ENCODE measurements at regions of chr11 and their contacts with region 1.

Region 1: DNA sequence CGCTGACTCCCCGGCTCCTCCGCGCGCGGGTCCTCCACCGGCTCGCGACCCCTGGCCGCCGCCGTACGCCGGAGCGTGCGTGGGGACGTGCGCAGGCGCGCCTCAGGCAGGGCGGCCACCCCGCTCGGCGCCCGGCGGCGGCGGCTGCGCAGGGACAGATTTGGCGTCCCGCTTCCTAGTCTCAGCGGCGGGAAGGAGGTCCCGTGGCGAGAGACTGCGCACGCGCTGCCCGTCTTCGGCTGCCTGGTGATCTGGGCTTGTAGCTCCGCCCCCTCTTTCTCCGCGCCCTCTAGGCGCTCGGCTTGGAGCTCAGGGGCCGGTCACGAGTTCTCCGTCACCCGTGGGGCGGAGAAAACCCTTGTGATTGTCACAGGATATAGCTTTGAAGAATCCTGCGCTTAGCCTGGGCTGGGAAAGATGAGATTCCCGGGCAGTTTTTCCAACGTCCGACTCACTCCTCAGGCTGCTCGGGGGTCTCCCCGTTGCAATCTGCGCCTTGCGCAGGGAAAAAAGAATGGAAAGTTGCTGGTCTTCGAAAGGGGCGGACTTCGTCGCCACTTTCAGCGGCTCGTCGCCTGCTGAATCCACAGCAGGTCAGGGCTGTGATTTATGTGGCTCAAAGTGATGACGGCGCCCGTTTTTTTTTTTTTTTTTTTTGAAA is at the start of gene PATL1:
- DNase-seq: peak; percentile 99 to 100
- H3K4me3 ChIP-seq: peak within 1 kb of the TSS; percentile 66 to 96
- H3K27ac ChIP-seq: peak within 1 kb of the TSS; percentile 85 to 97
- H3K4me1 ChIP-seq: peaks cover 0 to 26% (median 23%) of the 10 kb centered on the region in 4 donors
- H3K27me3 ChIP-seq: no peaks in the 10 kb centered on the region
- CTCF ChIP-seq: no peak

Region 2: DNA sequence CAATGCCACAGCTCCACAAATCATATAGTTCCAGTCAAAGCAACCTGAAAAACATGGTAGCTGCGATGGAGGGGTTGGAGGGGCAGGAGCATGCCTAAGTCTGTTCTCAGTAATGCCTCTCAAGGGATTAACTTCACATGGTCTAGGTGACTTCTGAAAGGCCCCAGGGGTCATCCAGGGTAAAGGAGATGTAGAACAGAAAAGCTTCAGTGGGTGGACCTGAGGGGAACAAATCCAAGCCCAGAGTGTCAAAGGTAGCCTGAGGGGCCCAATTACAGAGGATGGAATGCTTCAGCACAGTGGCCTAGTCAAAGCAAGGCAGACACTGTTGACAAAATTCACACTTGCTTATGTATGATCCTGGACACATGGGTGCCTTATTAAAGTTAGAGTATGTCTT is 134.4 kb before region 1 on chr11:
- intact Hi-C with region 1: loop called (anchors 5 kb)
- DNase-seq: no peak
- H3K4me3 ChIP-seq: no peak overlapping the region
- H3K27ac ChIP-seq: no peak overlapping the region
- H3K4me1 ChIP-seq: peaks cover 0 to 15% (median 3%) of the 10 kb centered on the region in 4 donors
- H3K27me3 ChIP-seq: peaks cover 0 to 3% of the 10 kb centered on the region in 2 donors
- CTCF ChIP-seq: no peak

Region 3: DNA sequence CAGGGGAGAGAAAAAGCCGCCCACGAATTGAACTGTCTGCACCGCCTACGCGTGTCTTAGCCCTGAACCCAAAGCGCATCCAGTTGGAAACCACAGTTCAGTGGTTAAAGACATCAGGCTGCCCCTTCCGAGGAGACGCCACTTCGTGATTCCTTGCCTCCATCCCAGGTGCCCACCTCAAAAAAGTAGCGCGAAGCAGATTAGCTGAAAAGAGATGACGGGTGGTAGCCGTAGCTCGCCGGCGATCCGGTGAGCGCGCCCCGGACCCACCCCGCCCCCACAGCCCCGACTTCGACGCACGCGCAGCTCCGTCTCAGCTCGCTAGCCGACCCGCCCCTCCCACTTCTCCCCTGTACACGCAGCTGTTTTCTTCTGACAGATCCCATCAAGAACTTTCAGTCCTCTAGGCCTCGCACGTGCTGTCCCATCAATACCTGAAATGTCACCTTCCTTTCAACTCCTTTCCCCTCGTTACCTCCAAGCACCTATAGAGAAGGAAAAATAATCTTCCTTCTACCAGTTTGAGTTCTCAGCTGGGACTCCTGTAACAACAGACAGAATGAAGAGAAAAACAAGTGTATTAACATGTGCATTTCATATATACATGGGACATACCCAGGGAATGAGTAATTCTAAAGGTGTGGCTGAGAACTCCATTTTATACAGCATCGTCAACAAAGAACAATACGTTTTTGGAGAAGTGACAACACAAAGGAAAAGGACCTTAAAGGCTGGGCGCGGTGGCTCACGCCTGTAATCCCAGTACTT is 108.2 kb before region 1 on chr11:
- intact Hi-C with region 1: loop called (anchors 10 kb)
- DNase-seq: peak; percentile 88 to 94
- H3K4me3 ChIP-seq: peak overlapping the region; percentile 85 to 96
- H3K27ac ChIP-seq: peak overlapping the region; percentile 90 to 93
- H3K4me1 ChIP-seq: peaks cover 0 to 26% (median 5%) of the 10 kb centered on the region in 4 donors
- H3K27me3 ChIP-seq: no peaks in the 10 kb centered on the region
- CTCF ChIP-seq: no peak

Region 4: DNA sequence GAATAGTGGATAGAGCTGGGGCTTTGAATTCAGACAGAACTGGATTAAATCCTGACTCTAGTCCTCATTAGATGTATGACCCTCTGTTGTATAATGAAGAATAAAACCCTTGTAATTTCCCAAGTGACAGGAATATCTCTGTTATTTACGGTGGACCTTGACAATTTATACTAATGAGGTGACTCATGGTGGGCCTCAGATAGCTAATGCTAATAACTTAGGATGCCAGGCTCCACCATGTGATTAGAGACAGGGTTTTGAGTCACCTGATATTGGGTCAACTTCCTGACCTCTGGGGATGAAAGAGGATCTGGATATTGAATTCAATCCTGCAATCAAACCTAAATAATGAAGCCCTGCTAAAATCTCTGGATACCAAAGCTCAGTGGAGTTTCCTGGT is 87.1 kb before region 1 on chr11:
- intact Hi-C with region 1: no loop called
- DNase-seq: no peak
- H3K4me3 ChIP-seq: no peak overlapping the region
- H3K27ac ChIP-seq: no peak overlapping the region
- H3K4me1 ChIP-seq: no peaks in the 10 kb centered on the region
- H3K27me3 ChIP-seq: no peaks in the 10 kb centered on the region
- CTCF ChIP-seq: no peak

Region 5: GRCh38 chr11:59615637-59616395 is 53.3 kb before region 1 on chr11 and contains the start of gene OSBP:
- intact Hi-C with region 1: loop called (anchors 5 kb)
- DNase-seq: peak; percentile 100
- H3K4me3 ChIP-seq: peak within 1 kb of the TSS; percentile 82 to 96
- H3K27ac ChIP-seq: peak within 1 kb of the TSS; percentile 95 to 96
- H3K4me1 ChIP-seq: peaks cover 7 to 38% (median 29%) of the 10 kb centered on the region in 4 donors
- H3K27me3 ChIP-seq: no peaks in the 10 kb centered on the region
- CTCF ChIP-seq: peak in 1 of 2 experiments; percentile 13

Region 6: GRCh38 chr11:59753650-59754493 is 84.8 kb after region 1 on chr11:
- intact Hi-C with region 1: loop called (anchors 5 kb)
- DNase-seq: peak; percentile 89 to 91
- H3K4me3 ChIP-seq: peak overlapping the region; percentile 80 to 90
- H3K27ac ChIP-seq: peak overlapping the region; percentile 91 to 94
- H3K4me1 ChIP-seq: peaks cover 0 to 24% (median 10%) of the 10 kb centered on the region in 4 donors
- H3K27me3 ChIP-seq: no peaks in the 10 kb centered on the region
- CTCF ChIP-seq: peak; percentile 91 to 95

Region 7: GRCh38 chr11:59802639-59803176 is 133.6 kb after region 1 on chr11:
- intact Hi-C with region 1: loop called (anchors 10 kb)
- DNase-seq: no peak
- H3K4me3 ChIP-seq: no peak overlapping the region
- H3K27ac ChIP-seq: peak overlapping the region in 1 of 2 donors; percentile 20
- H3K4me1 ChIP-seq: no peaks in the 10 kb centered on the region
- H3K27me3 ChIP-seq: no peaks in the 10 kb centered on the region
- CTCF ChIP-seq: peak; percentile 68 to 79

Region 8: GRCh38 chr11:60288531-60288930 is 619.5 kb after region 1 on chr11:
- intact Hi-C with region 1: no loop called
- DNase-seq: no peak
- H3K4me3 ChIP-seq: no peak overlapping the region
- H3K27ac ChIP-seq: no peak overlapping the region
- H3K4me1 ChIP-seq: no peaks in the 10 kb centered on the region
- H3K27me3 ChIP-seq: no peaks in the 10 kb centered on the region
- CTCF ChIP-seq: no peak